B cell (primary cell): ENCODE measurements at regions of chr4 and their contacts with region 1.

Region 1: GRCh38 chr4:150867148-150867547 is 147.9 kb downstream of the LRBA start:
- DNase-seq: peak; percentile 77
- ATAC-seq: peak; percentile 57
- H3K4me3 ChIP-seq: no peak overlapping the region
- H3K4me3 Mint-ChIP-seq: no peak overlapping the region
- H3K27ac ChIP-seq: no peak overlapping the region
- H3K27ac Mint-ChIP-seq: no peak overlapping the region
- H3K4me1 ChIP-seq: no peaks in the 10 kb centered on the region
- H3K4me1 Mint-ChIP-seq: no peaks in the 10 kb centered on the region
- H3K27me3 ChIP-seq: no peaks in the 10 kb centered on the region
- H3K27me3 Mint-ChIP-seq: no peaks in the 10 kb centered on the region
- CTCF ChIP-seq: peak; percentile 87

Region 2: GRCh38 chr4:149980941-149981340 is 886.2 kb before region 1 on chr4:
- CTCF ChIA-PET with region 1: interaction called, 20 read pairs
- POLR2A ChIA-PET with region 1: no interaction called
- intact Hi-C with region 1: loop called (anchors 1 kb)
- DNase-seq: peak; percentile 51
- ATAC-seq: peak; percentile 41
- H3K4me3 ChIP-seq: no peak overlapping the region
- H3K4me3 Mint-ChIP-seq: no peak overlapping the region
- H3K27ac ChIP-seq: no peak overlapping the region
- H3K27ac Mint-ChIP-seq: no peak overlapping the region
- H3K4me1 ChIP-seq: no peaks in the 10 kb centered on the region
- H3K4me1 Mint-ChIP-seq: no peaks in the 10 kb centered on the region
- H3K27me3 ChIP-seq: no peaks in the 10 kb centered on the region
- H3K27me3 Mint-ChIP-seq: peaks cover 3% of the 10 kb centered on the region
- CTCF ChIP-seq: peak; percentile 88

Region 3: GRCh38 chr4:149999485-150000074 is 867.6 kb before region 1 on chr4:
- CTCF ChIA-PET with region 1: interaction called, 11 read pairs
- POLR2A ChIA-PET with region 1: no interaction called
- intact Hi-C with region 1: loop called (anchors 1 kb)
- DNase-seq: peak; percentile 52
- ATAC-seq: no peak
- H3K4me3 ChIP-seq: no peak overlapping the region
- H3K4me3 Mint-ChIP-seq: no peak overlapping the region
- H3K27ac ChIP-seq: no peak overlapping the region
- H3K27ac Mint-ChIP-seq: no peak overlapping the region
- H3K4me1 ChIP-seq: no peaks in the 10 kb centered on the region
- H3K4me1 Mint-ChIP-seq: peaks cover 2% of the 10 kb centered on the region
- H3K27me3 ChIP-seq: no peaks in the 10 kb centered on the region
- H3K27me3 Mint-ChIP-seq: peaks cover 5% of the 10 kb centered on the region
- CTCF ChIP-seq: peak; percentile 75

Region 4: GRCh38 chr4:150297861-150298474 is 569.2 kb before region 1 on chr4:
- CTCF ChIA-PET with region 1: interaction called, 28 read pairs
- POLR2A ChIA-PET with region 1: no interaction called
- intact Hi-C with region 1: loop called (anchors 2 kb)
- DNase-seq: peak; percentile 26
- ATAC-seq: no peak
- H3K4me3 ChIP-seq: no peak overlapping the region
- H3K4me3 Mint-ChIP-seq: no peak overlapping the region
- H3K27ac ChIP-seq: no peak overlapping the region
- H3K27ac Mint-ChIP-seq: no peak overlapping the region
- H3K4me1 ChIP-seq: no peaks in the 10 kb centered on the region
- H3K4me1 Mint-ChIP-seq: no peaks in the 10 kb centered on the region
- H3K27me3 ChIP-seq: no peaks in the 10 kb centered on the region
- H3K27me3 Mint-ChIP-seq: no peaks in the 10 kb centered on the region
- CTCF ChIP-seq: peak; percentile 60

Region 5: GRCh38 chr4:150814873-150815272 is 52.3 kb before region 1 on chr4:
- CTCF ChIA-PET with region 1: interaction called, 10 read pairs
- POLR2A ChIA-PET with region 1: no interaction called
- intact Hi-C with region 1: no loop called
- DNase-seq: no peak
- ATAC-seq: no peak
- H3K4me3 ChIP-seq: no peak overlapping the region
- H3K4me3 Mint-ChIP-seq: no peak overlapping the region
- H3K27ac ChIP-seq: no peak overlapping the region
- H3K27ac Mint-ChIP-seq: no peak overlapping the region
- H3K4me1 ChIP-seq: no peaks in the 10 kb centered on the region
- H3K4me1 Mint-ChIP-seq: no peaks in the 10 kb centered on the region
- H3K27me3 ChIP-seq: no peaks in the 10 kb centered on the region
- H3K27me3 Mint-ChIP-seq: no peaks in the 10 kb centered on the region
- CTCF ChIP-seq: no peak

Region 6: DNA sequence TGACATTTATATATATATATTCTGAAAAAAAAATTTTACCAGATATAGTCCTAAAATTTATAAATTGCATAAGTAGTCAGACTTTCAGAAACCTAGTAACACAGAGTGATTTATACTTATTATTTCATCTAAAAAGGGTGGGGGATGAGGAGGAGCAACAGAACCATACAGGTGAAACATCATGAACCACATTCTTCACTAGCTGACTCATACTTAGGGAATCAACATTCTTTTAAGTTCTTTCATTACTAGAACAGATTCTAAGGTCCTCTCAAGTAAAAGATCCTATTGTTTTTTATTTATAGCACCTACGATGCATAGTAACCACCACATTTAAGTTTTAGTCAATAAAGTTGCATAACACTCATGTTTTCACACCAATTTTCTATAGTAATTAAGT is 18.1 kb before region 1 on chr4:
- CTCF ChIA-PET with region 1: interaction called, 19 read pairs
- POLR2A ChIA-PET with region 1: no interaction called
- intact Hi-C with region 1: no loop called
- DNase-seq: no peak
- ATAC-seq: no peak
- H3K4me3 ChIP-seq: no peak overlapping the region
- H3K4me3 Mint-ChIP-seq: no peak overlapping the region
- H3K27ac ChIP-seq: no peak overlapping the region
- H3K27ac Mint-ChIP-seq: no peak overlapping the region
- H3K4me1 ChIP-seq: no peaks in the 10 kb centered on the region
- H3K4me1 Mint-ChIP-seq: peaks cover 7% of the 10 kb centered on the region
- H3K27me3 ChIP-seq: no peaks in the 10 kb centered on the region
- H3K27me3 Mint-ChIP-seq: no peaks in the 10 kb centered on the region
- CTCF ChIP-seq: no peak

Region 7: GRCh38 chr4:150855981-150856510 is 11.1 kb before region 1 on chr4:
- CTCF ChIA-PET with region 1: interaction called, 19 read pairs
- POLR2A ChIA-PET with region 1: interaction called, 3 read pairs
- intact Hi-C with region 1: no loop called
- DNase-seq: no peak
- ATAC-seq: no peak
- H3K4me3 ChIP-seq: no peak overlapping the region
- H3K4me3 Mint-ChIP-seq: no peak overlapping the region
- H3K27ac ChIP-seq: no peak overlapping the region
- H3K27ac Mint-ChIP-seq: no peak overlapping the region
- H3K4me1 ChIP-seq: no peaks in the 10 kb centered on the region
- H3K4me1 Mint-ChIP-seq: peaks cover 7% of the 10 kb centered on the region
- H3K27me3 ChIP-seq: no peaks in the 10 kb centered on the region
- H3K27me3 Mint-ChIP-seq: no peaks in the 10 kb centered on the region
- CTCF ChIP-seq: no peak